ENCODE measurements at regions of chr12 and their contacts with region 1.

Region 1: DNA sequence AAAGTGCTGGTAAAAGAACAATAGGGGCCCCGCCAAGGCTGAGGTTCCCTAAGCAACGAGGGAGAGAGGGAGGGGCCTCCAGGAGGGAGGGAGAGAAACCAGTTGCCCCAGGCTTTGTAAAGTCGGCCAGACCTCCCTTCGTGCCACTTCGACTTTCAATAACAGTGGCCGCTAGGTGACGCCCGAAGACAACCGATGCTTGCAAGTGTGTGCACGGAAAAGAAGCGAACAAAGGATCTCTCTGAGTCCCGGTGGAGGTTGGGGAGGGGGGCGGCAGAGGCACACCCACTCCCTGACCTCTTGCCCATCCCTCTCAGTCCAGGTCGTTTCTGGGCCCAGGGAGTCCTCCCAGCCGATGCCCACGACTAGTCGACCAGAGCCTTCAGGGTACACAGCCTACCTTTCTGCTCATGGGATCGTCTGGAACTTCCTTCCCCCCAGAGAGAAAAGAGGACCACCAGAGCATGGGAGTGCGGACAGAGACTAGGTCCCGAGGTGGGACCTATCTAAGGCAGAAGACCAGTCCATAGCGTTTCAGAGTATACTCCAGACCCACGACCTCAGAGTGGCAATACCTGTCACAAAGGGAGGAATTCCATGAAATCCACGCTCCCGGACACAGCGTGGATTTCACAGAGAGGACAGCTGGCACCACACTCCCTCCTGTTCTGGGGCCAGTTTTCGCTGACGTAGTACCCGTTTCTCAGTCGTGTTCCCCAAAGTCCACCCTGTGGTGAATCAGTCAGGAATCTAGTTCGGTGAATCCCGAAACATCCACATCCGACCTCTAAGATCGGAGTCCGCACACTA is 262.7 kb upstream of the ALG10B start:
- DNase-seq: no peak
- ATAC-seq: peak; percentile 82
- H3K4me3 ChIP-seq: peak overlapping the region; percentile 30 to 57
- H3K27ac ChIP-seq: no peak overlapping the region
- H3K4me1 ChIP-seq: no peaks in the 10 kb centered on the region
- H3K27me3 ChIP-seq: no peaks in the 10 kb centered on the region
- CTCF ChIP-seq: peak; percentile 89

Region 2: GRCh38 chr12:38138225-38139221 is 84.7 kb after region 1 on chr12:
- CTCF ChIA-PET with region 1: no interaction called
- POLR2A ChIA-PET with region 1: no interaction called
- in situ Hi-C with region 1: no loop called
- intact Hi-C with region 1: loop called (anchors 5 kb)
- DNase-seq: peak; percentile 91
- ATAC-seq: peak; percentile 85
- H3K4me3 ChIP-seq: peak overlapping the region; percentile 51 to 72
- H3K27ac ChIP-seq: no peak overlapping the region; the same call in 1 of the 2 replicates
- H3K4me1 ChIP-seq: no peaks in the 10 kb centered on the region
- H3K27me3 ChIP-seq: no peaks in the 10 kb centered on the region
- CTCF ChIP-seq: peak; percentile 92

Region 3: GRCh38 chr12:38279756-38280155 is 225.9 kb after region 1 on chr12:
- CTCF ChIA-PET with region 1: no interaction called
- POLR2A ChIA-PET with region 1: no interaction called
- in situ Hi-C with region 1: no loop called
- intact Hi-C with region 1: no loop called
- DNase-seq: no peak
- ATAC-seq: no peak
- H3K4me3 ChIP-seq: no peak overlapping the region
- H3K27ac ChIP-seq: no peak overlapping the region
- H3K4me1 ChIP-seq: no peaks in the 10 kb centered on the region
- H3K27me3 ChIP-seq: no peaks in the 10 kb centered on the region
- CTCF ChIP-seq: no peak

Region 4: GRCh38 chr12:38316391-38317129 is 262.7 kb after region 1 on chr12 and contains the start of gene ALG10B:
- CTCF ChIA-PET with region 1: no interaction called
- POLR2A ChIA-PET with region 1: no interaction called
- in situ Hi-C with region 1: no loop called
- intact Hi-C with region 1: loop called (anchors 2 kb)
- DNase-seq: peak; percentile 88
- ATAC-seq: peak; percentile 100
- H3K4me3 ChIP-seq: peak within 1 kb of the TSS; percentile 67 to 77
- H3K27ac ChIP-seq: peak within 1 kb of the TSS; percentile 86
- H3K4me1 ChIP-seq: peaks cover 3% of the 10 kb centered on the region; the same call in 1 of the 2 replicates
- H3K27me3 ChIP-seq: no peaks in the 10 kb centered on the region
- CTCF ChIP-seq: peak; percentile 48
- total RNA-seq, gene ALG10B: 7.2 TPM

Region 5: DNA sequence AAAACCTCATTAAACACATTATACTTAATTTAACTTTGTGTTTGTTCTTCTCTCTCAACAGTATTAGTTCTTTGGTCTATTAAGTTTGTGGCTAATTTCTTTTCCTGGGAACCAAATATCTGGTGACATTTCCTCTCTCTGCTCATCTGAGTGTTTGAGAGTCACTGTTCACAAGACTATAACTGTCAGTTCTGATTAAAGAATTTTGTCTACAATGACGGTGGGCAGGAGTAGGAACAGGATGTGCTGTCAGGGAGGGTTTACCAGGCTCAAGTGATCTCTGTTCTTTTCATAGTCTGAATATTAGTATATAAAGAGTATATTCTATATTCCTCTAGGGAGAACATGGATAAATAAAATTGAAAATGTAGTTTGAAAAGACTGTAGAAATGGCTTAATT is 355.7 kb after region 1 on chr12:
- CTCF ChIA-PET with region 1: no interaction called
- POLR2A ChIA-PET with region 1: no interaction called
- in situ Hi-C with region 1: no loop called
- intact Hi-C with region 1: no loop called
- DNase-seq: no peak
- ATAC-seq: no peak
- H3K4me3 ChIP-seq: no peak overlapping the region
- H3K27ac ChIP-seq: no peak overlapping the region
- H3K4me1 ChIP-seq: no peaks in the 10 kb centered on the region
- H3K27me3 ChIP-seq: no peaks in the 10 kb centered on the region
- CTCF ChIP-seq: no peak